ENCODE measurements at regions of chr18 and their contacts with region 1.

Region 1: GRCh38 chr18:839224-840022 is 27.4 kb upstream of the YES1 start:
- DNase-seq: peak; percentile 84
- H3K4me3 ChIP-seq: peak overlapping the region; percentile 7; the same call in 1 of the 2 replicates
- H3K27ac ChIP-seq: peak overlapping the region; percentile 37
- H3K4me1 ChIP-seq: peaks cover 6% of the 10 kb centered on the region
- H3K27me3 ChIP-seq: no peaks in the 10 kb centered on the region

Region 2: DNA sequence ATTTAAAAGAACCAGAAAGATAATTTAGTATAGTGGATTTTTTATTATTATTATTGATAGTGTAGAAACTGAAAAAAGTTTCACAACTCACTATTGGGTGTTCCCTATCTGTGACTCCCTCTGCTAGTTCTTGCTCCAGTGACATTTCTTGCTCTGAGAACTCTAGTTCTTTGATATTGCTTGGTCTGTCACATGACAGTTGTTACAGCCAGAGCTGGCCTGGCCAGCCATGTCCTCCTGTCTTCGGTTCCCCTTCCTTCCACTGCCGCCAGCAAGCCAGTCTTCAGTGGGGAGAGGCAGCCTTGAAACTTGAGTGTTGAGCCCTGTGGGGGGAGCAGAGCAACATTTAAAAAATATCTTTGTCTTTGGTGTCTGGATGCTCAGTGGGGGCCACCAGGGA is 563.9 kb before region 1 on chr18:
- in situ Hi-C with region 1: loop called (anchors 10 kb)
- DNase-seq: no peak
- H3K4me3 ChIP-seq: no peak overlapping the region
- H3K27ac ChIP-seq: no peak overlapping the region
- H3K4me1 ChIP-seq: no peaks in the 10 kb centered on the region
- H3K27me3 ChIP-seq: no peaks in the 10 kb centered on the region

Region 3: GRCh38 chr18:616380-616995 is 222.9 kb before region 1 on chr18:
- in situ Hi-C with region 1: no loop called
- DNase-seq: peak; percentile 82
- H3K4me3 ChIP-seq: no peak overlapping the region
- H3K27ac ChIP-seq: no peak overlapping the region
- H3K4me1 ChIP-seq: peaks cover 9% of the 10 kb centered on the region; the same call in 1 of the 2 replicates
- H3K27me3 ChIP-seq: no peaks in the 10 kb centered on the region